ENCODE measurements at regions of chr12 and their contacts with region 1.

Region 1: DNA sequence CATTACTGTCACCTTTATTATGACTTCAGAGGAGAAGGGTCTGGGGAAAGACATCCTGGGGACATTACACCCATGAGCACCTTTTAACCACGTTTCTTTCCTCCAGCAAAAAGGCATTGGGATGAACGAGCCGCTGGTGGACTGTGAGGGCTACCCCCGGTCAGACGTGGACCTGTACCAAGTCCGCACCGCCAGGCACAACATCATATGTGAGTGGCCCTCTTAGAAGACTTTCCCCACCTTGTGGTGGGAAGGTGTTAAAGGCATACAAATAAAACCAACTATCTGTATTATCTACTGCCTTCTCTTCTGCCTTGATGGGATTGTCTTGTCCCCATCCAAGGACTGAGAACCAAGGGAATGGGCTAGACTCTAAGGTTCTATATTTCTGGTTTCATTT is 6.0 kb downstream of the PSMD9 start:
- DNase-seq: no peak
- ATAC-seq: no peak

Region 2: DNA sequence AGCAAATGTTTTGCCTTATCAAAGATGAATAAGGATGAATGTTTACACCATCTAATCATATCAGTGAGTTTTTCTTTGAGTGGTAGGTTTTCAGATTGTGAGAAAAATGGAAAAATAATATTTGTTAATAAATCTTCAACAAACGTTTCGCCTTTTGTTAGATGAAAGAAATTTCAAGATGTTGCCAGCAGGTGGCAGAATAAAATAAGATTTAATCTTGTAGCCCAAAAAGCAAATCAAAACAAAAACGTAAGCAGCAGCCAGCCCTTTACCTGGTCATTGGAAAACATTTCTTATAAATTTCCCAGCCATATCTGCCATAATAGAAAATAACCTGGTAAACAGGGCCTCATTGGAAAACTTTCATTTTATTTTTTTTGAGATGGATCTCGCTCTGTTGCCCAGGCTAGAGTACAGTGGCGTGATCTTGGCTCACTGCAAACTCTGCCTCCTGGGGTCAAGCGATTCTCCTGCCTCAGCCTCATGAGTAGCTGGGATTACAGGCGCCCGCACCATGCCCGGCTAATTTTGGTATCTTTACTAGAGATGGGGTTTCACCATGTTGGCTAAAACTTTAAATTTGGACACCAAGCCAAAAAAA is 197.4 kb before region 1 on chr12:
- intact Hi-C with region 1: loop called (anchors 10 kb)
- DNase-seq: no peak
- ATAC-seq: no peak

Measured in sciatic nerve (tissue), 2 donors.